ENCODE measurements at regions of chr3 and their contacts with region 1.

Region 1: GRCh38 chr3:188954590-188955208 is 217.1 kb upstream of the TPRG1 start:
- DNase-seq: peak; percentile 71
- H3K4me3 ChIP-seq: no peak overlapping the region
- H3K27ac ChIP-seq: no peak overlapping the region
- H3K27me3 ChIP-seq: no peaks in the 10 kb centered on the region
- CTCF ChIP-seq: peak; percentile 97

Region 2: DNA sequence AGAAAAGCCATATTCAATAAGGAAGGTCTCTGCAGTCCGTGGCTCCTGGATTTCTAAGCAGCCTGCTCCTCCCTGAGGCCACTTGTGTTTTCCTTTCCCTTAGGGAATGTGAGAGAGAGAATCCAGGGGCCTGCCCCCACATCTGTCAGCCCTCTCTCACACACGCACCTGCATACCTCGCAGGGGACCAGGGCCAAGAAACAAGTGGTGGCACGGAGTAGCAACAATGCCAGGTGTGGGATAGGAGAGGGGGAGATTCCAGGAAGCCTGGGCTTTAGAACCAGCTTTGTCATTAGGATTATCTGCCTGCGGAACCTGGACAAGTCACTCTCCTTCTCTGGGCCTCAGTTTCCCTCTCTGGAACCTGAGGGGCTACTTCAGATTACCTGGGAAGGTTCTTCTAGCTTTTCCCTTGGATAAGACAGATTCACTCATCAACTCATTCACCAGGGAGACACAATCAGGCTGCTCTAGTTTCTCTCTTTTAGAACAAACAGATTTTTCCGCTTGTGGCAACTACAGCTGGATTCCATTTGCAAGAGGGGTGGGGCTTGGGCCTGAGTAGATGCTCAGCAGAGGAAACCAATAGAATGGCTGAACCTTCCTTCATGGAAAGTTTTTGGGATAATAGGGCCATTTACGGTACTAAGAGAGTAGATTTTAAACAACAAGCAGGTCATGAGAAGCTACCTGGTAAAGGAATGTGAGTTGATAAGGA is 1228.9 kb before region 1 on chr3:
- CTCF ChIA-PET with region 1: interaction called, 10 read pairs
- POLR2A ChIA-PET with region 1: no interaction called
- DNase-seq: no peak
- H3K4me3 ChIP-seq: no peak overlapping the region
- H3K27ac ChIP-seq: peak overlapping the region; percentile 25
- H3K27me3 ChIP-seq: no peaks in the 10 kb centered on the region
- CTCF ChIP-seq: no peak

Region 3: GRCh38 chr3:188480011-188480410 is 474.7 kb before region 1 on chr3:
- CTCF ChIA-PET with region 1: interaction called, 15 read pairs
- POLR2A ChIA-PET with region 1: no interaction called
- DNase-seq: no peak
- H3K4me3 ChIP-seq: no peak overlapping the region
- H3K27ac ChIP-seq: no peak overlapping the region
- H3K27me3 ChIP-seq: no peaks in the 10 kb centered on the region
- CTCF ChIP-seq: no peak

Region 4: DNA sequence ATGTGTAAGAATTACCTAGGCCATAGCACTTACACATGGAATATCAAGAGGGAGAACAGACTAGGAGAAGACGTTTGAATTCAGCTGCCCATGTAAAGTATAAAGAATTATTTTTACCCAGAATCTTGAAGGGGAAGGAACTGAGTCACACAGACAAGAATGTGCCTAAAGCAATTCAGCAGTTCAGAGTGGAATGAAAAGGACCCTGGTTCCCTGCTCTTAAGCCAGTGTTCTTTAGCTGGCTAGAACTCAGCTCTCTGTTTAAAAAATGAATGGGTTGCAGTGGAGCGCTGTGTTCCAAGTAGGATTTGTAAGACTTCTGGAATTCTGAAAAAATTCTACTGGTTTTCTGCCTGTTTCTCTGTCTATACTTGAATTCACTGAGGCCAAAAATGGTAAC is 360.6 kb before region 1 on chr3:
- CTCF ChIA-PET with region 1: interaction called, 14 read pairs
- POLR2A ChIA-PET with region 1: no interaction called
- DNase-seq: peak; percentile 80
- H3K4me3 ChIP-seq: no peak overlapping the region
- H3K27ac ChIP-seq: no peak overlapping the region
- H3K27me3 ChIP-seq: no peaks in the 10 kb centered on the region
- CTCF ChIP-seq: no peak

Region 5: GRCh38 chr3:188706176-188706575 is 248.5 kb before region 1 on chr3:
- CTCF ChIA-PET with region 1: interaction called, 11 read pairs
- POLR2A ChIA-PET with region 1: no interaction called
- DNase-seq: no peak
- H3K4me3 ChIP-seq: no peak overlapping the region
- H3K27ac ChIP-seq: no peak overlapping the region
- H3K27me3 ChIP-seq: no peaks in the 10 kb centered on the region
- CTCF ChIP-seq: no peak

Region 6: DNA sequence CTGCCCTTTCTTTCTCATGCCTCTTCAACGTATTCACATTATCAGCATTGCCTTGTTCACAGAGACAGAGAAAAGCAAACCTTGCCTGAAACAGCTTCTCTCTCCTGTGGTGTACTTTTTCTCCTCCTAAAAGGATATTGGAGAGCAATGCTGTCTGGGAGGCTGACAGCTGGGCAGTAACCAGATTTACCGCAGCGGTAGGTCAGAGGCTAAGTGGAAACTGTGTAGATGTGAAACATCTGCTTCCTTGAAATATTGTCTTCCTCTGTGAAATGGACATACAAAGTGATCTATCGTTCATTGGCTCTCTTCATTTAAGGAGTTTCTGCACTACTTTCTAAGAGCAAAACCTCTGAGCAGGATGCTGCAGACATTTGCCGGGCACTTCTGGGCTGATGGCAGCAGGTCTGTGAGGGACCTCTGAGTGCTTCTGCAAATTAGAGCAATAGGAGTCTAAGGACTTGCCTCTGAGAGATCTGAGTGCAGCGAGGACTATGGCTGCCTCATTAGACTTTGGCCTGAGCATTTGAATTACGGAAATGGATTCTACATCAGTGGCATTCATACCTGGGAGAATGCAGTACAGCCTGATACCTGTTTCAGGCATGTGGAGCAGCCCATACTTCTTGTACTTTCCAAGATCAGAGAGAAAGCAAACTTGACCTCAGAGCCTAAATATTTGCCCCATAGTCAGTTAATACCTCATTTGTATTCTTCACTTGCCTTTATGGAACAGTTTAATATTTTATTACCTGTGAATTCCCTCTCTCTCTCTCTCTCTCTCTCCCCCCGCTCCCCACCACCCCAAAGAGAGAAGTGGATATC is 43.5 kb before region 1 on chr3:
- CTCF ChIA-PET with region 1: no interaction called
- POLR2A ChIA-PET with region 1: no interaction called
- DNase-seq: no peak
- H3K4me3 ChIP-seq: no peak overlapping the region
- H3K27ac ChIP-seq: no peak overlapping the region
- H3K27me3 ChIP-seq: no peaks in the 10 kb centered on the region
- CTCF ChIP-seq: no peak

Region 7: DNA sequence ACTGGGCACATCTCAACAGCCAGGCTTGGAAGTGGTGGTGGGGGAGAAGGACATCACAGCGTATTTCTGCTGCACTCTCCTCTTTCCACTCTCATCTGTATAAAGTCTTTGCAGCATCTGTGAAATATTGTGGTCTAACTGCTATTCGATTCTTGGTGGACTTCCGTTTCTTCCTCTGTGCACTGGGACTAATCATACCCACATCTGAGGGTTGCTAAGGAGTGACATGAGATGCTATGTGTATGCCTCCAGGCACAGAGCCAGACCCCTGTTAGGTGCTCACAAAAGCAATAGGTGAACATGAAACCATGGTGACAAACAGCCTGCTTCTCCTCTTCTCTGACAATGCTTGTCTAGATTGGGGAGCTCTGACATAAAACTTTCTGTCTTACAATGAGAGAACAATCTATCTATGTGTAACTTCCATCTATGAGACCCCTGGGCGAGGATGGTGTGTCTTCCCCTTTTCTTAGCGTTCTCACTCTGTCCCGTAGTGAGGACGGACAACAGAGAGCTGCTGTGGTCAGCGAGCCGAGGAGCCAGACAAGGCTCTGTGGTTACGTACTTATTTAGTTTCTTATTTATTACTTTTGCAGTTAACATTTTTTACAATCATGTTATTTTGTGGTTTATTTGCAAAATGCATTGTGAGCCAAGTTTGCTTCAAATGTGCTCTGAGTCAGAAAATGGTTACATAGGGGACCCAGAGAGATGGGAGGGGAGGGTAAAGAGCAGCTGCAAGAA is 20.3 kb after region 1 on chr3:
- CTCF ChIA-PET with region 1: interaction called, 22 read pairs
- POLR2A ChIA-PET with region 1: no interaction called
- DNase-seq: no peak
- H3K4me3 ChIP-seq: peak overlapping the region; percentile 11; the same call in 1 of the 2 replicates
- H3K27ac ChIP-seq: peak overlapping the region; percentile 55
- H3K27me3 ChIP-seq: peaks cover 3% of the 10 kb centered on the region
- CTCF ChIP-seq: no peak

Measured in AG04450 (cell line).